GM12878 (cell line): ENCODE measurements at regions of chr10 and their contacts with region 1.

Region 1: GRCh38 chr10:56823849-56824248 is 462.8 kb upstream of the ZWINT start:
- DNase-seq: peak; percentile 5
- ATAC-seq: peak; percentile 67
- H3K4me3 ChIP-seq: no peak overlapping the region
- H3K27ac ChIP-seq: no peak overlapping the region
- H3K4me1 ChIP-seq: no peaks in the 10 kb centered on the region
- H3K27me3 ChIP-seq: no peaks in the 10 kb centered on the region
- CTCF ChIP-seq: peak; percentile 60 to 66 (median 61); a peak in 5 of 6 replicates
- EP300 ChIP-seq: no peak
- POLR2A ChIP-seq: no peak
- RAD21 ChIP-seq: peak; percentile 90

Region 2: GRCh38 chr10:56360967-56361612 is 462.8 kb before region 1 on chr10 and contains the start of gene ZWINT:
- CTCF ChIA-PET with region 1: no interaction called
- POLR2A ChIA-PET with region 1: no interaction called
- RAD21 ChIA-PET with region 1: no interaction called
- SMC1A ChIA-PET with region 1: no interaction called
- in situ Hi-C with region 1: no loop called
- intact Hi-C with region 1: loop called (anchors 10 kb)
- DNase-seq: peak; percentile 90
- ATAC-seq: peak; percentile 98
- H3K4me3 ChIP-seq: peak within 1 kb of the TSS; percentile 83
- H3K27ac ChIP-seq: peak within 1 kb of the TSS; percentile 79
- H3K4me1 ChIP-seq: no peaks in the 10 kb centered on the region; the same call in none of the 2 replicates
- H3K27me3 ChIP-seq: no peaks in the 10 kb centered on the region
- CTCF ChIP-seq: no peak
- EP300 ChIP-seq: no peak
- POLR2A ChIP-seq: peak; percentile 89
- RAD21 ChIP-seq: no peak
- polyA plus RNA-seq, gene ZWINT: 129 to 151 TPM

Region 3: GRCh38 chr10:56469482-56469881 is 354.4 kb before region 1 on chr10:
- CTCF ChIA-PET with region 1: interaction called, 17 read pairs
- POLR2A ChIA-PET with region 1: no interaction called
- RAD21 ChIA-PET with region 1: interaction called, 15 read pairs
- SMC1A ChIA-PET with region 1: interaction called, 4 read pairs
- in situ Hi-C with region 1: no loop called
- intact Hi-C with region 1: loop called (anchors 1 kb)
- DNase-seq: no peak
- ATAC-seq: peak; percentile 78
- H3K4me3 ChIP-seq: no peak overlapping the region
- H3K27ac ChIP-seq: no peak overlapping the region
- H3K4me1 ChIP-seq: no peaks in the 10 kb centered on the region
- H3K27me3 ChIP-seq: no peaks in the 10 kb centered on the region
- CTCF ChIP-seq: peak in 2 of 3 experiments; percentile 8 to 44; a peak in 2 of 6 replicates
- EP300 ChIP-seq: no peak
- POLR2A ChIP-seq: no peak
- RAD21 ChIP-seq: peak; percentile 62